OCI-LY7 (cell line): ENCODE measurements at regions of chr16 and their contacts with region 1.

Region 1: GRCh38 chr16:4307215-4308037 is 8.4 kb upstream of the GLIS2 start:
- DNase-seq: peak; percentile 98
- H3K4me3 ChIP-seq: peak overlapping the region; percentile 91
- H3K27ac ChIP-seq: peak overlapping the region; percentile 90
- H3K4me1 ChIP-seq: peaks cover 44% of the 10 kb centered on the region
- CTCF ChIP-seq: no peak

Region 2: DNA sequence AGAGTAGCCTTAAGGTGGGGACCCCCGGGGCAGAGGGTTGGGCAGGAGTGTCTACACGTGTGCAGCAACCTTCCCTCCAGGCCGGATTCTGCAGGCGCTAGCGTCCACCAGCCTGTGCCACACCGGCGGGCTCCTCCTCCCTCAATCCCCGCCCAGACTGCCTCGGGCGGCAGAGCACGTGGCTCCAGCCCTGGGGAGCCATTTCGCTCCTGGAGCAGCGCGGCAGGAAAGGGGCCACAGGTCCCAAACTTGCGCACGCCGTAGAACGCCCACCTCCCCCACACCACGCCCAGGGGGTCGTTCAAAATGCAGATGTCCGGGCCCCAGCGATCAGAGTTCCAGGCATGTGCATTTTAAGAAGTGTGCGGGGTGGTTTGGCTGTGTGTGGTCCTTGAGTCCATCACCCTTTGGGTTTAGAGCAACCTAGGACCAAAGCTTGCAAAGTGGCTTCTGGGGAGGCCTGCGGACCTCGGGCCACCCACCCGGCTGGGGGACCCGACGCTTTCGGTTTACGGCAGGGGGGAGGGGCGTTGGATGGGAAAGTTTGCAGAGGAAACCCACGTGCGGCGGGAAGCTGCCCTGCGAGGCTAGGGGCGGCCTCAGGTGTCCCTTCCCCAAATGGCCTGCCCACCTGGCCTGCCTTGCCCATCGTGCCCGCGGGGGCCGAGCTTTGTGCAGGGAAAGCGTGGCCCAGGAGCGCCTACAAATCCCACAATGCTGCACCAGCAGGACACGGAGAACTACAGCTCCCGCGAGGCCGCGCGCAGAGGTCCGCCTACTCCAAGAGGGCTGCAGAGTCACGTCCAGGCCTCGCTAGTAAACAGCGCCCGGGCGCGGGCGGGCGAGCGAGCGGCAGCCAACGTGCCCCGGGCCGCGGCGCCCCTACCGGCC is 36.0 kb before region 1 on chr16:
- CTCF ChIA-PET with region 1: no interaction called
- POLR2A ChIA-PET with region 1: no interaction called
- intact Hi-C with region 1: loop called (anchors 2 kb)
- DNase-seq: peak; percentile 94
- H3K4me3 ChIP-seq: peak overlapping the region; percentile 83
- H3K27ac ChIP-seq: peak overlapping the region; percentile 89
- H3K4me1 ChIP-seq: peaks cover 24% of the 10 kb centered on the region
- CTCF ChIP-seq: no peak

Region 3: DNA sequence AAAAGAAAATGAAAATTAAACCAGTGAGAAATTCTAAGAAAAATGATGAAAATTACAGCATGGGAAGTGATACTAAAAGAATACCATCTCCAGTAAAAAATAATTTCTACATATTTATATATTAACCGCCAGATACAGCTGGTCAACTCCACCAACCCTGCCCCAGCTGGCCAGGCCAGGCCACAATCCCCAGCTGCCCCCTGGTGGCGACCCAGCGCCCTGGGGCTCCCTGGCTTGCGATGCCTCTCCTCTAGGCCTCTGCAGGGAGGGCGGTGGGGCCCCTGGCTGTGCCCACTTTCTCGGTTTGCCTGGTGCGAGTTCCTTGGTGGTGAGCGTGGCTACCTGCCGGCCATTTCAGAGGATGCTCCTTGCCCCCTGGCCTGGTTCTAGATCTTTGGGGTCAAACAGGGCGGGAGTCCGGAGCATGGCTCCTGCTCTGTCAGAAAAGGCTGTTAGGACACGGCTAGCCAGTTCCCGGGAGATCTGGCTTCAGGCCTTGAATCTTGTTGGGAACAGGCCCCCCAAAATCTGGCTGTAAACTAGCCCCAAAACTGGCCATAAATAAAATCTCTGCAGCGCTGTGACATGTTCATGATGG is 22.9 kb after region 1 on chr16:
- CTCF ChIA-PET with region 1: interaction called, 5 read pairs
- POLR2A ChIA-PET with region 1: interaction called, 3 read pairs
- intact Hi-C with region 1: loop called (anchors 1 kb)
- DNase-seq: peak; percentile 71
- H3K4me3 ChIP-seq: no peak overlapping the region
- H3K27ac ChIP-seq: no peak overlapping the region
- H3K4me1 ChIP-seq: peaks cover 10% of the 10 kb centered on the region
- CTCF ChIP-seq: peak; percentile 97

Region 4: DNA sequence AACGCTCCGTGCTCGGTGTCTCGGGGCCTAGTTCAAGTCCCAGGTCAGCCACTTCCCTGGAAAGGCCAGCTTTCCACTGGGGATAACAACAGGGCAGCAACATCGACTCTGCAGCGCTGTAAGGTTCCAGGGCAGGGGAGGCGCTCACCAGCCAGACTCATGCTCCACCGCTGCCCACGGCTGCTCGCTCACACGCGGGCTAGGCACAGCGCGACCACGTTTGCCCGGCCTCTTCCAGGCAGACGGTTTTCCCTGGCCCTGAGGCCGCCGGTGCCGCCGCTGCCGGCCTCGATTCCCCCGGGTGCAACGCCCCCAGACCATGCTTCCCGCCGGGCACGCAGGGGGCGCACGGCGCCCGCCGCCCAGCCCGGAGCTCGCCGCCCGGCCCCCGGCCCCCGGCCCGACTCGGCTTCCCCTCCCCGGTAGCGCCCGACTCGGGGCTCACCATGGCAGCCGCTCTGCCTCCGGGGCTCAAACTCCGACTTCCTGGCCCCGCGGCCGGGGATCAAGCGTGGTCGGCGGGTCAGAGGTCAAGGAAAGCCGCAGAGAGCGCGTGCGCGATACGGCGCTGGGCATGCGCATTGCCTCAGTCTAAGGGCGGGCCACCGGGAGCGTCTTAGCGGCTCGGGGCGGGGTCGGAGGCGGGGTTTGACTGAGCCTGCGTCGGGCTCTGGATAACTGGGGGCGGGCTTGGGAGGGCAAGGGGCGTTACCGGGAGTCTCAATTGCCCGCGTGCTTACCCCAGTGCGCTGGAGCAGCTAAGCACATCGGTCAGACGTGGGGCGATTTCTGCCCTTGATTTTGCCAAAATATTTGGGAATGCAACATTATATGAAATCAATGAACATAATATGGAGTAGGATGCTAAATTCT is 43.6 kb after region 1 on chr16 and contains the start of gene PAM16:
- CTCF ChIA-PET with region 1: no interaction called
- POLR2A ChIA-PET with region 1: no interaction called
- intact Hi-C with region 1: no loop called
- DNase-seq: peak; percentile 97
- H3K4me3 ChIP-seq: peak within 1 kb of the TSS; percentile 99
- H3K27ac ChIP-seq: peak within 1 kb of the TSS; percentile 57
- H3K4me1 ChIP-seq: peaks cover 18% of the 10 kb centered on the region
- CTCF ChIP-seq: peak; percentile 23; the same call in 1 of the 2 replicates
- total RNA-seq, gene PAM16: 80.6 and 92.1 TPM in 2 replicates

Region 5: DNA sequence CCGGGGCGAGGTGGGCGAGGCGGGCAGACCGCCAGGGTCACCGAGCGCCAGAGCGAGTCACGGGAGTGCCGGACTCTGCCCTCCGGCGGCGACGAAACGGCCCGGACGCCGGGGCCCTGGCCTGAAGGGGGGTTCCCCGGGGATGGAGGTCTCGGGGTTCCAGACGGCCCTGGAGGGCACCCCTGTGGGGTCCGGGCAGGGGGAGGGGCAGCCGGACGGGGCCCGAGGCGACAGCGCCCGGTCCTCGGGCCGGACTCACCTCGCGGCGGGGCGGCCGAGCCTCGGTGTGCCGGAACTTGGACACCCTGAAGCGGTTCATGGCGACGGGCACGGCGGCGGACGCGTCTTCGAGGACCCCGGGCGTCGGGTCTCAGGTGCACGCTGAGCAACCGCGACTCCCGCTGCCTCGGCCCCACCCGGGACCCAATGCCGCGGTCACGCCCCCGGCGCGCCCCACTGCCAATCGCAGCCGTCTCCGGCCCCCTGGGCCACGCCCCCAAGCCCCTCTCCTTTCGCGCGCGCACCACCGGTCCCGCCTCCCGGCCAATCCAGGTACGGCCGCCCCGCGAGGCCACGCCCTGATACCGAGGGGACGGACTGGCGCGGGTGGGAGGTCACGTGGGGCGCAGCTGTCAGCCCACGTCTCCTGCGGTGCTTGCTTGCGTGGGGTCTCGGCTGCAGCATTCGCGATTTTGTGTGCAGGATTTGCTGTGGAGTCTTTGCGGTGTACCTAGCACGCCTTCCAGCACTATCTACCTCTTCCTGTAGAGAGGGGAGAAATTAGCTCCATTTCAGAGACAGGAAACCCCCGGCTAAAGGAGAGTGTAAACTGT is 109.0 kb after region 1 on chr16 and contains the start of gene CORO7:
- CTCF ChIA-PET with region 1: no interaction called
- POLR2A ChIA-PET with region 1: no interaction called
- intact Hi-C with region 1: loop called (anchors 5 kb)
- DNase-seq: peak; percentile 96
- H3K4me3 ChIP-seq: peak within 1 kb of the TSS; percentile 98
- H3K27ac ChIP-seq: peak within 1 kb of the TSS; percentile 75
- H3K4me1 ChIP-seq: peaks cover 30% of the 10 kb centered on the region
- CTCF ChIP-seq: no peak
- total RNA-seq, gene CORO7: 64.0 and 77.2 TPM in 2 replicates

Region 6: DNA sequence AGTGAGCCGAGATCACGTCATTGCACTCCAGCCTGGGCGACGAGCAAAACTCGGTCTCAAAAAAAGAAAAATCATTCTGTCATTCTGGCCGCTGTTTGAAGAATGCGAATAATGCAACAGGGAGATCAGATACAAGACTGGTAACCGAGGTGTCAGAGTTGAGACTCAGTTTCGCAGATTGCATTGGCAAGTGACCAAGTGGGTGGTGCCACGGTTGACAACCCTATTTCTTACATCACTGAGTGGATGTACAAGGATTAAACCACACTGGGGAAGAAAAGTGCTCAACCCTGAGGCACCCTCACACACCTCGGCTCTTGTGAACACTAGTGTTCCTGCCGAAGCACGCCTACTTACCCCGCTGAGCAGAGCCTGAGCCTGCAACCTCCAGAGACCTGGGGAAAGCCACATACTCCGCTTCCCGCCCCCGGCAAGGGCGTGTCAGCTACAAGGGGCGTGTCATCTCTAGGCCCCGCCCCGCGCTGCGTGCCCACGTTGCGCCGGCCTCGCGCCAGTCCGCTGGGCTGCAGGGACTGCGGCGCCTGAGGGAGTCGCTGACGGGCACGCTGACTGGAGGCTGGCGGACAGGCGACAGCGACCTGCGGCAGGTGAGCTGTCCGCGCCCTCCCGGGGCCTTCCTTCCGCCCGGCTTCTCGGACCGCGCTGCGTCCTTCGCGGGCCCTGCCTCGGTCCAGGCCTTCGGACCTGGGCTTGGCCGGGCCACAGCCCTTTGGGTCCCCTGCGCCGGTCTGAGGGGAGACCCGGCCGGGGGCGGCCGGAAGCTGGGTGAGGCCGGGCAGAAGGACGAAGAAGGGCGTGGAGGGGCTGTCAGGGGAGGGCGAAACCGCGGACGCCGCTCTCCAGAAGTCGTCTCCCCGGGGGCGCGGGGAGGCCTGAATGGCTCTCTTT is 168.7 kb after region 1 on chr16 and contains the start of gene HMOX2:
- CTCF ChIA-PET with region 1: no interaction called
- POLR2A ChIA-PET with region 1: interaction called, 4 read pairs
- intact Hi-C with region 1: loop called (anchors 5 kb)
- DNase-seq: peak; percentile 96
- H3K4me3 ChIP-seq: peak within 1 kb of the TSS; percentile 97
- H3K27ac ChIP-seq: peak within 1 kb of the TSS; percentile 78
- H3K4me1 ChIP-seq: peaks cover 34% of the 10 kb centered on the region
- CTCF ChIP-seq: peak; percentile 62
- total RNA-seq, gene HMOX2: 46.0 and 55.2 TPM in 2 replicates

Region 7: DNA sequence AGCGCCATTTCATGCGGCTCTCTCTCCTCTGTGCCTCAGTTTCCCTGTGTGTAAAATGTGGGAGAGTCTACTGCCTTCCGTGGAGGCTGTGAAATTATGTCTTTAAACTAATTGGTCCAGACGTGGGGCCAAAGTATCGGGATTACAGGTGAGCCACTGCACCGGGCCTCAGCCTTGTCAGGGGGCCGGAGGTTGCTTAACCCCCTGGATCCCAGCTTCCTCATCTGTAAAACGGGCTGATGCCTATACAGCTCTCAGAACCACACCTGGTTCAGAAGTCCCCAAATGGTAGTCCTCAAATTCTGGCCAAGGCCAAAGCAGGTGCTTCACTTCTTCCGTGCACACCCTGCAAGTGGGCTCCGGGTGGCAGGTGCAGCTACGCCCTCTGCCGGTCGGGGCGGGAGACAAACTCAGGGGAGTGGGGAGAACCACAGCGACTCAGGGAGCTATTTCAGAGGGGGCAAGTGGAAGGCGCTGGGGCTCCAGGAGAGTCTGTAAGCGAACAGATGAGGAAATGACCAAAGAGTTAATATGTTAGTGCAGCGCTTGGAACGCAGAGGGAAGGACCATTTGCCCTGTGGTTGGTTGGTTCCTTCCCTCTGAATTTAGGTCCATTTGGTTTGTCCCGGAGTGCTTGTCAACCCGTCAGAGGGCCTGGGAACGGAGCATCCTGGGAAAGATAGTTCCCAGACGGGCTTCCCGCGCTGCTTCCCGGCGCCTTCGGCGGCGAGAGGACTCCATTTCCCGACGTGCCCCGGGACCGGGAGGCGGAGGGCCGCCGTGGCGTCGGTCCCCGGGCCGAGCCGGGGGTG is 316.8 kb after region 1 on chr16 and contains the start of gene MGRN1:
- CTCF ChIA-PET with region 1: no interaction called
- POLR2A ChIA-PET with region 1: no interaction called
- intact Hi-C with region 1: loop called (anchors 5 kb)
- DNase-seq: peak; percentile 98
- H3K4me3 ChIP-seq: peak within 1 kb of the TSS; percentile 99
- H3K27ac ChIP-seq: peak within 1 kb of the TSS; percentile 54
- H3K4me1 ChIP-seq: peaks cover 21% of the 10 kb centered on the region
- CTCF ChIP-seq: peak; percentile 100
- total RNA-seq, gene MGRN1: 14.1 and 14.3 TPM in 2 replicates